ENCODE measurements at regions of chr6 and their contacts with region 1.

Region 1: GRCh38 chr6:44086931-44087574 is 40.2 kb downstream of the MRPL14 start:
- DNase-seq: peak; percentile 50 to 91
- ATAC-seq: peak; percentile 28 to 61
- H3K4me3 ChIP-seq: no peak overlapping the region
- H3K27ac ChIP-seq: peak overlapping the region; percentile 91 to 99 (median 92)
- H3K4me1 ChIP-seq: peaks cover 36 to 44% of the 10 kb centered on the region in 2 donors
- H3K27me3 ChIP-seq: no peaks in the 10 kb centered on the region
- CTCF ChIP-seq: peak in 1 of 5 experiments; percentile 12
- POLR2A ChIP-seq: peak; percentile 44 to 80

Region 2: DNA sequence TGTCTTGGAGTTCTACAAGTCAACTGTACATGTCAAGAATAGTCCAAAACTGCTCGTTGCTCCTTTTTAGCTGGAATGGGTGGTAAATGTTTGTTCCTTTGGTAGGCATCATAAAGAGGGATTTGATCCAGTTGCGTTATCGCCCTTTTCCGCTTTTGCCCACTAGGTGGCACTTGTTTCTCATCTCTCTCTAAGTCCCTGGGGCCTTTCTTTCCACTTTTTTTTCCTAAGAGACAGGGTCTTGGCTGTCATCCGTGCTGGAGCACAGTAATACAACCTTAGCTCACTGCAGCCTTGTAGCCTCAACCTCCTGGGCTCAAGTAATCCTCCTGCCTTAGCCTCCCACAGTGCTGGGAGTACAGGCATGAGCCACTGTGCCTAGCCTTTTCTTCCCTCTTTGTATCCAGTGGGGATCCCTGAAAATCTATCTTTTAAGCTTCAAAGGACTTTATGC is 478.7 kb before region 1 on chr6:
- in situ Hi-C with region 1: loop called in 1 of 4 experiments (anchors 10 kb)
- intact Hi-C with region 1: no loop called
- DNase-seq: peak in 1 of 2 donors; percentile 65
- ATAC-seq: peak; percentile 69 to 81
- H3K4me3 ChIP-seq: no peak overlapping the region
- H3K27ac ChIP-seq: no peak overlapping the region
- H3K4me1 ChIP-seq: no peaks in the 10 kb centered on the region
- H3K27me3 ChIP-seq: no peaks in the 10 kb centered on the region
- CTCF ChIP-seq: peak; percentile 37 to 84 (median 72)
- POLR2A ChIP-seq: no peak

Region 3: GRCh38 chr6:44138717-44139350 is 51.8 kb after region 1 on chr6:
- in situ Hi-C with region 1: no loop called
- intact Hi-C with region 1: no loop called
- DNase-seq: no peak
- ATAC-seq: no peak
- H3K4me3 ChIP-seq: no peak overlapping the region
- H3K27ac ChIP-seq: no peak overlapping the region
- H3K4me1 ChIP-seq: peaks cover 0 to 3% of the 10 kb centered on the region in 2 donors
- H3K27me3 ChIP-seq: no peaks in the 10 kb centered on the region
- CTCF ChIP-seq: no peak
- POLR2A ChIP-seq: no peak